ENCODE measurements at regions of chr17 and their contacts with region 1.

Region 1: DNA sequence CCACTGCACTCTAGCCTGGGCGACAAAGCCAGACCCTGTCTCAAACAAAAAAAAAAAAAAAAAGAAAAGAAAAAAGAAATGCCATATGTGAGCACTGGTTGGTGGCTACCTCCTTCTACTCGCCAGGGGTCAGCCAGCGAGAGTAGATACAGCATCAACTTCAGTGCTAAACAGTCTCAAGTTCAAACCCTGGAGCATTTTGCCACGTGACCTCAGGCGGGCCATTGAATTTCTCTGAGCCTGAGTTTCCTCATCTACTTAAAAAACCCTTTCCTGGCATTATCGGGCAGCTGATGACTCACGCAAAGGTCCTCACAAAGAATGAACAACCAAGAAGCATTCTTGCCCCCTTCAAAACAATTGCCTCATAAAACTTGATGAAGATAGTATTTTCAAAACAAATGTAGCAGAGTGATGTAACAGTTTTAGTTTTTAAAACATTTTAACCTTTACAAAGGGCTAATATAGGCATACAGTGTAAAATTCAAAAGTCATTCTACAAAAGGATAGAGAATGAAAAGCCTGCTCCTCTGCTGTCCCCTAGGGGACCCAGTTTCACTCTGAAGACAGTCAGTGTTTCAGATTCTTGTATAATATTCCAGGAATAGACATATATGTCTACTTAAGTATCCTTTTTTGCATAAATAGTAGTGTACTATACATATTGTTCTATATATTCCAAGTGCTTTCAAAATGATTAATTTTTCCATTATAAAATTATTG is 28.4 kb downstream of the DNAH2 start:
- DNase-seq: no peak
- H3K4me3 ChIP-seq: no peak overlapping the region
- H3K27ac ChIP-seq: no peak overlapping the region
- H3K4me1 ChIP-seq: no peaks in the 10 kb centered on the region
- H3K27me3 ChIP-seq: no peaks in the 10 kb centered on the region
- CTCF ChIP-seq: no peak
- POLR2A ChIP-seq: no peak

Region 2: DNA sequence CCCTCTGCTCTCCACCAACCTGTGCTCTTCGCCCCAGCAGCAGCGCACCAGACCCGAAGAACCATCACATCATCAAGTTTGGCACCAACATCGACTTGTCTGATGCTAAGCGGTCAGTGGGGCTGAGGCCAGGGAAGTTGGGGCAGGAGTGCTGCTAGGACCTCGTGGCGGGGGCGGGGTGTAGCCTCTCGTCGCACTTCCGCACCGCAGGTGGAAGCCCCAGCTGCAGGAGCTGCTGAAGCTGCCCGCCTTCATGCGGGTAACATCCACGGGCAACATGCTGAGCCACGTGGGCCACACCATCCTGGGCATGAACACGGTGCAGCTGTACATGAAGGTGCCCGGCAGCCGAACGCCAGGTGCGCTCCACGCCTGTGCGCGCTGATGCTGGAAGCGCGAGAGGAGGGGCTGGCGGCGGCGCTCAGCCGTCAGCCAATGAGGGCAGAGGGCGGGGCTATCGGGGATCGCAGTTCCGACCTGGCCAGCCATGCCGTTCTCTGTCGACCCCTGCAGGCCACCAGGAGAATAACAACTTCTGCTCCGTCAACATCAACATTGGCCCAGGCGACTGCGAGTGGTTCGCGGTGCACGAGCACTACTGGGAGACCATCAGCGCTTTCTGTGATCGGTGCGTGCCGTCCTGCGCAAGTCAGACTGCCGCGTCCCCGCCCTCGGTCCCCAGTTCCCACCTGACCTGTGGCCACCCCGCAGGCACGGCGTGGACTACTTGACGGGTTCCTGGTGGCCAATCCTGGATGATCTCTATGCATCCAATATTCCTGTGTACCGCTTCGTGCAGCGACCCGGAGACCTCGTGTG is 105.7 kb after region 1 on chr17:
- intact Hi-C with region 1: loop called (anchors 2 kb)
- DNase-seq: peak; percentile 90
- H3K4me3 ChIP-seq: no peak overlapping the region
- H3K27ac ChIP-seq: peak overlapping the region; percentile 27 to 43
- H3K4me1 ChIP-seq: peaks cover 5% of the 10 kb centered on the region
- H3K27me3 ChIP-seq: no peaks in the 10 kb centered on the region
- CTCF ChIP-seq: peak; percentile 95 to 100 (median 99)
- POLR2A ChIP-seq: no peak

Region 3: DNA sequence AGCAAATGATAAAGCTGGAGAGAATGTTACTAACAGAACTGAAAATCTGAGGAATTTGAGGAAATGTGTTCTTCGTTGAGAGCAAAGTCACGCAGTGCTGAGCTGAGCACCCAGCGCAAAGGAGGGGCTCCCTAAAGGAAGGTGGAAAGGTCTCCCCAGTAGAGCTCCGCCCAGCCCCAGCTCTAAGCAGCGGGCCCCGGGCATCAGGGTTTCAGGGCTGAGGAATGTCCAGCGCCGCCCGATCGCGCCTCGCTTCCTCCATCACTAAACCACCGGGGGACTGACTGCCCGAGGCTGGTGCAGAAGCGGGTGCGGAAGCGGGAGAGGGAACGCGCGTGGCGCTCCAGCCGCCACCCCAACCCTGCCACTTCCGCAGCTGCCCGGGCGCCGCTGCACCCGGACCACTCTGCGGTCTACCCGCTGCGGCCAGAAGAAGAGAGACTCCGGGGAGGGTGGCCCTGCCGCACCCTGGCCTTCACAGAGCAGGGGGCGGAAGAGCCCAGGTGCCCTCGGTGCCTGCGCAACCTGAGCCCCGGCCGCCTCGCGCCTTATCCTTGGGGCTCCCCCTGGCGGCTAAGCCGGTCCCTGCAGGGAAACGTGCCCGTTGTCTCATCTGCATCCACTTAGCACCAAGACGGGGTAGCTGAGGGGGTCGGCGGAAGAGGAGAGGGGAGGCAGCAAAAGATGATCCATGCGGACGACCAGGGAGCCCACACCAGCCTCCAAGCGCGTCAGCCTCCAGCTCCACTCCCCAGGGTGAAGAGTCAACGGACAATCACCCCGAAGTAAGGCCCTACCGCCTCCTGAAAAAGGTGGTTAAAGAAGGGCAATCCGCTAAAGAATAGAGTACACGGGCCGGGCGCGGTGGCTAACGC is 244.1 kb after region 1 on chr17:
- intact Hi-C with region 1: loop called (anchors 10 kb)
- DNase-seq: peak; percentile 79
- H3K4me3 ChIP-seq: peak overlapping the region; percentile 43 to 49
- H3K27ac ChIP-seq: peak overlapping the region; percentile 57 to 67
- H3K4me1 ChIP-seq: no peaks in the 10 kb centered on the region
- H3K27me3 ChIP-seq: no peaks in the 10 kb centered on the region
- CTCF ChIP-seq: peak; percentile 94 to 98 (median 97)
- POLR2A ChIP-seq: no peak

Measured in prostate gland (tissue), 2 donors.